ENCODE measurements at regions of chr12 and their contacts with region 1.

Region 1: DNA sequence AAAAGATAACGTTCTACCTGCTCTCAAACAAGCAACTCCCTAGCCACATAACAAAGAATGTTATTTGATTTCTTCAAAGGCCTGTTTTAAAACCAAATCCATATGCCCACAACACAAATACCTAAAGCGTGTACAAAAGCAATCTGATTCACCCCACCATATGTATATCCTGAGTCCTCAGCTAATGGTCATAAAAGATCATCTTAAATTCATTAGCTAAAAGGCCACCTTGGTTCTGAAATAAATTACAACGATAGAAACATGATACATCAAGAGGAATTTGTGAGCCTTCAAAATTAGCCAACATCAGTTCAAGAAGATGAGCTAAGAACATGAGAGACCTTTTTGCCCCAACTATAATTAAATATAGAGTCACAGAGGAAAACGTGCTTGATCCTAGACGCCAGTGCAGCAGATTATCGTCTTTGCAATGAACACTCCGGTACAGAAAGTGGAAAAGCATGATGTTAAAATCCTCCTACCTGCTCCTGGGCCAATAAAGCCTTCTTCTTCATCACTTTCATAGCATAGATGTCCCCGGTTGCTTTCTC is 20.0 kb downstream of the CIT start:
- DNase-seq: no peak
- ATAC-seq: no peak
- H3K4me3 ChIP-seq: no peak overlapping the region
- H3K27ac ChIP-seq: no peak overlapping the region
- H3K4me1 ChIP-seq: no peaks in the 10 kb centered on the region
- H3K27me3 ChIP-seq: no peaks in the 10 kb centered on the region

Region 2: GRCh38 chr12:118999107-118999506 is 858.0 kb before region 1 on chr12:
- intact Hi-C with region 1: loop called in 1 of 2 experiments (anchors 10 kb)
- DNase-seq: no peak
- ATAC-seq: no peak
- H3K4me3 ChIP-seq: no peak overlapping the region
- H3K27ac ChIP-seq: no peak overlapping the region
- H3K4me1 ChIP-seq: no peaks in the 10 kb centered on the region
- H3K27me3 ChIP-seq: peaks cover 0 to 2% of the 10 kb centered on the region in 2 donors

Region 3: DNA sequence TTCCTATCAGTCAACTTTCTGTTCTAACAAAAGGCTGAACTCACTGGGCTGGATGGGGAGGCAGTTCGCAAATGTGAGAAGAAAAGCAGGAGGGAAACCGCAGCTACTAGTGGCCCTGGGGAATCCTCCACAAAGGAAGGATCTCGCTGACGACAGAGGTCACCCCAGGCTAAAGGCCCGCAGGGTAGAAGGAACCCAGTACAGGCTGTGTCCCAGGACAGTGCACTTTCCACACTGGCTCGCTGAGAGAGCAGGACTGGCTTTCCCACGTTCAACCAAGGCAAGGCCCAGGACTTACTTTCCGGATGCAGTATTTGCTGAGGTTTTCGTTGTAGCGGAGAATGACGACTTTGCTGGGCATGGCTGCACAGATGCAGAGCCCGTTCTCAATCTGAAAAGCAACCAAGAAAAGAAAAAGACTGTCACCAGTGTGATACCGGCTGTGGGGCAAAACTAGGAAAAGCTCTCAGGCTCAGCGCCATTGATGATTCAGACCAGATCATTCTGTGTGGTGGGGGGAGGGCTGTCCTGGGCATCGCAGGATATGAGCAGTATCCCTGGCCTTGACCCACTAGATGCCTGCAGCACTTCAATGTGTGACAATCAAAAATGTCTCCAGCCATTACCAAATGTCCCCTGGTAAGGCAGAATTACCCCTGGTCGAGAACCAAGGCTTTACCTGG is 152.9 kb before region 1 on chr12:
- intact Hi-C with region 1: no loop called
- DNase-seq: no peak
- ATAC-seq: no peak
- H3K4me3 ChIP-seq: no peak overlapping the region
- H3K27ac ChIP-seq: no peak overlapping the region
- H3K4me1 ChIP-seq: no peaks in the 10 kb centered on the region
- H3K27me3 ChIP-seq: no peaks in the 10 kb centered on the region

Region 4: GRCh38 chr12:119730381-119730780 is 126.7 kb before region 1 on chr12:
- intact Hi-C with region 1: no loop called
- DNase-seq: no peak
- ATAC-seq: no peak
- H3K4me3 ChIP-seq: no peak overlapping the region
- H3K27ac ChIP-seq: no peak overlapping the region
- H3K4me1 ChIP-seq: peaks cover 0 to 4% of the 10 kb centered on the region in 2 donors
- H3K27me3 ChIP-seq: no peaks in the 10 kb centered on the region

Region 5: DNA sequence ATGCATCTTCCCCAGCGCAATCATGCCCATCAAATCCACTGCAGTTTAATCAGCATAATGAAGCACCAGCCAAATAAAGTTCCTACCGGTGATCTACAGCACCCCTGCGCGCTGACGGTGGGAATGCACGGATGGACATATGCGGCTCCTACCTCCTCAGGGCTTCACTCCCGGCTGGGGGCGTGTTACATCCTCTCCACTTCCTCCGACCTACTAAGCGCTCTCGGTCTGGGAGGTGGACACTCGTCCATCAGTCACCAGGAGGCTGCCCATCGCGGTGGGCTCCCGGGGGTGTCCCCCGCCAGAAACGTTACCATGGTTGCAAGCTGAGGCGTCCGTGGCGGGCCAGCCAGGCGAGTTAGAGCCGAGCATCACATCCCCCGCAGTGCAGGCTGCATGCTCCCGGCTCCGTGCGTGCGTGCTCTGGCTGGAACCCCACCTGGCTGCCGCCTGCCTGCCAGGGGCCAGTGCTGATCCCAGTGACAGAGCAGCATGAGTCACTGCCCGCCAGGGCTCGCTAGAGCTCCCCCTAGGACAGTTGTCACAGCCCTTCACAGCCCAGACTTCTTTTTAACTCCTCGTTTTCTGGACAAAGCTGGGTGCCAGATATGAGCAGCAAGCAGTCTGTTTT is 53.0 kb before region 1 on chr12:
- intact Hi-C with region 1: no loop called
- DNase-seq: peak; percentile 60 to 86
- ATAC-seq: peak; percentile 86
- H3K4me3 ChIP-seq: peak overlapping the region in 1 of 2 donors; percentile 10
- H3K27ac ChIP-seq: no peak overlapping the region
- H3K4me1 ChIP-seq: no peaks in the 10 kb centered on the region
- H3K27me3 ChIP-seq: no peaks in the 10 kb centered on the region

Region 6: GRCh38 chr12:119885549-119885948 is 28.4 kb after region 1 on chr12:
- intact Hi-C with region 1: no loop called
- DNase-seq: no peak
- ATAC-seq: no peak
- H3K4me3 ChIP-seq: no peak overlapping the region
- H3K27ac ChIP-seq: no peak overlapping the region
- H3K4me1 ChIP-seq: no peaks in the 10 kb centered on the region
- H3K27me3 ChIP-seq: no peaks in the 10 kb centered on the region